HAP-1 (cell line): ENCODE measurements at regions of chr9 and their contacts with region 1.

Region 1: GRCh38 chr9:108761655-108762347 is 94.0 kb downstream of the ACTL7B start:
- DNase-seq: peak; percentile 59 to 75
- H3K4me3 ChIP-seq: no peak overlapping the region
- H3K4me1 ChIP-seq: no peaks in the 10 kb centered on the region; the same call in 1 of the 2 replicates
- H3K27me3 ChIP-seq: no peaks in the 10 kb centered on the region

Region 2: GRCh38 chr9:107425101-107426045 is 1336.4 kb before region 1 on chr9:
- in situ Hi-C with region 1: loop called (anchors 10 kb)
- DNase-seq: peak; percentile 50 to 83
- H3K4me3 ChIP-seq: no peak overlapping the region
- H3K4me1 ChIP-seq: peaks cover 4% of the 10 kb centered on the region; the same call in 1 of the 2 replicates
- H3K27me3 ChIP-seq: no peaks in the 10 kb centered on the region